ENCODE measurements at regions of chr17 and their contacts with region 1.

Region 1: DNA sequence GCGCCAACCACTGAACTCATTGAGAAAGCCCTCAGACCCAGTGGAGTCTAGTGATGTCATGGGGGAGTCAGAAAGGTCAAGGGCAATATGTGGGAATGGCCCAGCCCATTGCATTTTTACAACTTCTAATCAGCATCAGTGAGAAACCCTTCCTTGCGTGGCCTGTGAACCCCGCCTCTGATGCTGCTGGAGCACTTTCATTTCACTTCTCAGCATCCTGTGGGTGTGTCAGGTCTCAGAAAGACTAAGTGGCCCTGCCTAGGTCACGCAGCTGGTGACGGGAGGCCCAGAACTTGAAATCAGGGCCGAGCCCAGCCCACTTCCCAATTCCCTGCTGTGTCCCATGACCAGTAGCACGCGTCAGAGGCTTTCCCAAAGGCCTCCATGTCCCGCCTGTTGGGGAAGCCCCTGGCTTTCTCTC is 6.1 kb downstream of the DNAI2 start:
- DNase-seq: no peak
- ATAC-seq: no peak
- H3K4me3 Mint-ChIP-seq: no peak overlapping the region
- H3K27ac Mint-ChIP-seq: peak overlapping the region; percentile 27; the same call in 1 of the 2 replicates
- H3K4me1 Mint-ChIP-seq: peaks cover 4% of the 10 kb centered on the region; the same call in 1 of the 2 replicates
- H3K27me3 Mint-ChIP-seq: peaks cover 9% of the 10 kb centered on the region
- CTCF ChIP-seq: no peak

Region 2: GRCh38 chr17:74163271-74163821 is 116.8 kb before region 1 on chr17:
- CTCF ChIA-PET with region 1: no interaction called
- POLR2A ChIA-PET with region 1: no interaction called
- DNase-seq: no peak
- ATAC-seq: peak; percentile 60
- H3K4me3 Mint-ChIP-seq: no peak overlapping the region
- H3K27ac Mint-ChIP-seq: no peak overlapping the region
- H3K4me1 Mint-ChIP-seq: 0 out of 2 replicates have a peak, but pooled peaks cover 2% of the 10 kb centered on the region
- H3K27me3 Mint-ChIP-seq: peaks cover 2% of the 10 kb centered on the region; the same call in 1 of the 2 replicates
- CTCF ChIP-seq: no peak

Region 3: DNA sequence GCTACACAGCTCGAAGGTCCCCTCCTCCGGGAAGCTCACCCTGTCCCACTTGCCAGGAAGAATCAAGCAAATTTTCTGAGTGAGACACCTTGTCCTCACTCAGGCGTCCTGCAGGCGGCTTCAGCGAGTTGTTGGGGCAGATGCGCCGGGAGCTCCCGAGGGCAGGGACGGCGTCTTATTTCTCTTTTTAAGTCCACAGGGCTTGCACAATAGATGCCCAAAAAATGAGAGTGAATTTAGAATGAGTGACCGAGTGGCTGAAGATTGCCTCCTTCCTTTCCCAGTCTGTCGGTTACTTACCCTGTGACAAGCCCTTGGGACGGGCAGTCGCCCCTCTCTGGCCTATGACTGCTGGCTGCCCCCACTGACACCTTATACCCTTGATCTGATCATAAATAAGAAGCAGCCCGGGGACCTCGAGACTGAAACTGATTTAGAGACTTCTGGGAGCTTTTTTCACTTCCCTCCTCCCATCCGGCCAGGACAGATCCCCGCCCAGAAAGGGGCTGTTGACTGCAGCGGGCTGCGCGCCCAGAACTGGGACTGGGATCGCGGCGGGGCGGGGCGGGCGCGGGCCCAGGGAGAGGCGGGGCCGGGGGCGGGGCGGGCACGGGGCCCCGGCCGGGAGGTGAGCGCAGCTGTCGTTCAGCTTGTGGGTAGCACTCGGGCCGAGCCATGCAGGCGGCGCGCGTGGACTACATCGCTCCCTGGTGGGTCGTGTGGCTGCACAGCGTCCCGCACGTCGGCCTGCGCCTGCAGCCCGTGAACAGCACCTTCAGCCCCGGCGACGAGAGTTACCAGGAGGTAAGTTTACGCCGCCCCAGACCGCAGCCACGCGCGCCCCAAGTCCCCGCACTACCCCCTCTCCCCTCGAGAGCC is 67.0 kb before region 1 on chr17 and contains the start of gene TTYH2:
- CTCF ChIA-PET with region 1: interaction called, 13 read pairs
- POLR2A ChIA-PET with region 1: interaction called, 5 read pairs
- DNase-seq: peak; percentile 74
- ATAC-seq: peak; percentile 34
- H3K4me3 Mint-ChIP-seq: peak within 1 kb of the TSS; percentile 93
- H3K27ac Mint-ChIP-seq: peak within 1 kb of the TSS; percentile 65
- H3K4me1 Mint-ChIP-seq: peaks cover 45% of the 10 kb centered on the region
- H3K27me3 Mint-ChIP-seq: peaks cover 37% of the 10 kb centered on the region
- CTCF ChIP-seq: no peak
- total RNA-seq, gene TTYH2: 3.5 to 5.1 TPM (median 4.5 TPM) in 3 replicates

Region 4: GRCh38 chr17:74245145-74245831 is 34.8 kb before region 1 on chr17:
- CTCF ChIA-PET with region 1: interaction called, 24 read pairs
- POLR2A ChIA-PET with region 1: no interaction called
- DNase-seq: peak; percentile 69
- ATAC-seq: peak; percentile 77
- H3K4me3 Mint-ChIP-seq: peak overlapping the region; percentile 40; the same call in 1 of the 2 replicates
- H3K27ac Mint-ChIP-seq: no peak overlapping the region
- H3K4me1 Mint-ChIP-seq: peaks cover 19% of the 10 kb centered on the region
- H3K27me3 Mint-ChIP-seq: peaks cover 7% of the 10 kb centered on the region
- CTCF ChIP-seq: no peak

Region 5: GRCh38 chr17:74259667-74260524 is 20.2 kb before region 1 on chr17:
- CTCF ChIA-PET with region 1: interaction called, 15 read pairs
- POLR2A ChIA-PET with region 1: no interaction called
- DNase-seq: peak; percentile 22
- ATAC-seq: peak; percentile 65
- H3K4me3 Mint-ChIP-seq: peak overlapping the region; percentile 31; the same call in 1 of the 2 replicates
- H3K27ac Mint-ChIP-seq: peak overlapping the region; percentile 60; the same call in 1 of the 2 replicates
- H3K4me1 Mint-ChIP-seq: peaks cover 18% of the 10 kb centered on the region
- H3K27me3 Mint-ChIP-seq: no peaks in the 10 kb centered on the region; the same call in 1 of the 2 replicates
- CTCF ChIP-seq: no peak

Region 6: GRCh38 chr17:74296548-74296936 is 16.4 kb after region 1 on chr17:
- CTCF ChIA-PET with region 1: interaction called, 112 read pairs
- POLR2A ChIA-PET with region 1: no interaction called
- DNase-seq: peak; percentile 56
- ATAC-seq: peak; percentile 74
- H3K4me3 Mint-ChIP-seq: no peak overlapping the region
- H3K27ac Mint-ChIP-seq: no peak overlapping the region
- H3K4me1 Mint-ChIP-seq: no peaks in the 10 kb centered on the region
- H3K27me3 Mint-ChIP-seq: peaks cover 2% of the 10 kb centered on the region; the same call in 1 of the 2 replicates
- CTCF ChIP-seq: no peak; the same call in 1 of the 2 replicates